ENCODE measurements at regions of chr4 and their contacts with region 1.

Region 1: GRCh38 chr4:154727540-154727939 is 16.3 kb upstream of the LRAT start:
- DNase-seq: no peak
- H3K4me3 ChIP-seq: no peak overlapping the region
- H3K27ac ChIP-seq: no peak overlapping the region
- H3K4me1 ChIP-seq: no peaks in the 10 kb centered on the region
- H3K27me3 ChIP-seq: no peaks in the 10 kb centered on the region
- CTCF ChIP-seq: no peak

Region 2: GRCh38 chr4:153852501-153852900 is 875.0 kb before region 1 on chr4:
- CTCF ChIA-PET with region 1: no interaction called
- POLR2A ChIA-PET with region 1: no interaction called
- intact Hi-C with region 1: no loop called
- DNase-seq: no peak
- H3K4me3 ChIP-seq: no peak overlapping the region
- H3K27ac ChIP-seq: no peak overlapping the region
- H3K4me1 ChIP-seq: no peaks in the 10 kb centered on the region
- H3K27me3 ChIP-seq: no peaks in the 10 kb centered on the region
- CTCF ChIP-seq: no peak

Region 3: GRCh38 chr4:154073107-154073822 is 654.3 kb before region 1 on chr4:
- CTCF ChIA-PET with region 1: no interaction called
- POLR2A ChIA-PET with region 1: no interaction called
- intact Hi-C with region 1: no loop called
- DNase-seq: no peak
- H3K4me3 ChIP-seq: no peak overlapping the region
- H3K27ac ChIP-seq: no peak overlapping the region
- H3K4me1 ChIP-seq: no peaks in the 10 kb centered on the region
- H3K27me3 ChIP-seq: no peaks in the 10 kb centered on the region
- CTCF ChIP-seq: no peak

Region 4: DNA sequence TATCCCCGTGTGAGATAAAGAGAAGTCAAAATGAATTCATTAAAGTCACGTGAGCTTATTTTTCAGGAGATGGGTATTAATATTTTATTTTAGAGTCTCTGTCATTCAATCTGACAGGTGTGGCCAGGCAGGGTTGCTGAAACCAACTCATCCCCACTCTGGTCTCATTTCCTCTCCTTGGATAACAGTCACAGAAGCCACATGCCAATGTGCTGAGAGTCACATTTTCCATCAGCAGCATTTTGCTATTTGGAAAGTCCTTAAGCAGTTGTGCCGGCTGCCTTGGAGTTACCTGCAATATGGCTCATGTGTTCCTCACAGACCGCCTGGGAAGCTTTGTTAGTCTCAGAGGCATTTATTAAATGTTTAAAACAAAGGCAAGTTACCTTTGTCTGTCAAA is 538.2 kb before region 1 on chr4:
- CTCF ChIA-PET with region 1: no interaction called
- POLR2A ChIA-PET with region 1: no interaction called
- intact Hi-C with region 1: no loop called
- DNase-seq: no peak
- H3K4me3 ChIP-seq: no peak overlapping the region
- H3K27ac ChIP-seq: no peak overlapping the region
- H3K4me1 ChIP-seq: no peaks in the 10 kb centered on the region
- H3K27me3 ChIP-seq: no peaks in the 10 kb centered on the region
- CTCF ChIP-seq: no peak

Region 5: DNA sequence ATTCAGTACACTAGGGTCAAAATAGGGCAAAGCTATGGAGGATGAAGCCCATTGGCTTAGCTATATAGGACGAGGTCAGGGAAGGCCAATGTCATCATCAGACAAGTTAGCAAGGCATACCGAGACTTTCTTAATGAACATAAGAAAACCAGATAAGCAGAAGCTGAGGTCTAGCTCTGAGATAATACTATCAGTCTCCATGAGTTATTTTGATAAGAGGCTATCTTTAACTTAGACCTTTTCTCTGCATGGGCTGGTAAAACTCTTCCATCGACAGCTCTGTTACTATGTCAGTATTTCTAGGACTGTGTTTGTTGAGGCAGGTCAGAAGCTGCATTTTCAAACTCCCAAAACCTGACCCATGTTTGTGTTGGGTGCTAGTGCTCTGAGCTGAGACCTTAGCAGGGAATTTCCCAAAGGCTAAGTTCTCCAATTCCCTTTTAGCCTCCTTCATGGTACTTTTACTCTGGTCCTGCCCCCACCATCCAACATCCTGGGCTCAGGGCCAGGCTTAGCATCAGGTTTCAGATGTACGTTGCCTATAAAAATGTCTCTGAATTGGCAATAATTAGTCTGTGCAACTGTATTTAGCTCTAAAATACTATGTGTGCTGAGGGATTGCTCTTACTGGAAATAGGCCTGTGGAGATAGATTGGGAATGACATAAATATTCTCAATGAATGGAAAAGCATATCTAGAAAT is 13.1 kb before region 1 on chr4:
- CTCF ChIA-PET with region 1: no interaction called
- POLR2A ChIA-PET with region 1: interaction called, 13 read pairs
- intact Hi-C with region 1: no loop called
- DNase-seq: peak; percentile 23
- H3K4me3 ChIP-seq: no peak overlapping the region
- H3K27ac ChIP-seq: no peak overlapping the region
- H3K4me1 ChIP-seq: peaks cover 18% of the 10 kb centered on the region
- H3K27me3 ChIP-seq: no peaks in the 10 kb centered on the region
- CTCF ChIP-seq: no peak

Region 6: DNA sequence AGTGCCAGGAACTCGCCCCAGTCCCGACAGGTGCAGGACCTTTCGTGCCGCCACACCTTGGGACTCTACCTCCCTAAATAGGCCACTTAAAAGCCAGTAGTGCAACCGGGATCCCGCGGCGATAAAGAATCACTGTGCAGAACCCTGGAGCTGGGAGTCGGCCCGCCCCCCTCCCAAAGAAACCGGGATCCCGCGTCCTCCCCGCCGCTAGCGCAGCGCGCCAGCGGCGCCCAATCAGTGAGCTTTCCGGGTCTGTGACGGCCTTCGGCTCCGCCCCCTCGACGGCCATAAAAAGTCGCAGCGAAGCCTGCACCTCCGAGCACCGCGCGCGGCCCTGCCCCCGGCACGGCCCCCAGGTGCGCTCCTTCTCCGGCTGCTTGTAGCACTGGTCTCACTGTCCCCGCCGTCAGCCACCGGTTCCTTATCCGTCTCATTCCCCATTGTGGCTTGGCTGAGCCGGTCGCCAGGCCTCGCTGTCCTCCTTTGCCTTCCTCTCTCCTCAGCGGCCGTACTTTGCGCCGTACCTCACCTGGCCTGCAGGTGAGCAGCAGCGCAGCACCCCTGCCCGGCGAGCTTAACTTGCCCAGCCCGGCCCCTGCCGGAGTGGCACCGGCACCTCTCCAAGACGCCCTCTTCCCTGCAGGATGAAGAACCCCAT is 16.3 kb after region 1 on chr4 and contains the start of gene LRAT:
- CTCF ChIA-PET with region 1: no interaction called
- POLR2A ChIA-PET with region 1: no interaction called
- intact Hi-C with region 1: no loop called
- DNase-seq: peak; percentile 81
- H3K4me3 ChIP-seq: peak within 1 kb of the TSS; percentile 61
- H3K27ac ChIP-seq: no peak within 1 kb of the TSS
- H3K4me1 ChIP-seq: peaks cover 12% of the 10 kb centered on the region
- H3K27me3 ChIP-seq: peaks cover 6% of the 10 kb centered on the region
- CTCF ChIP-seq: no peak
- total RNA-seq, gene LRAT: 1.1 and 1.7 TPM in 2 replicates